Upper lobe of right lung (tissue), 1 donor: ENCODE measurements at regions of chr5 and their contacts with region 1.

Region 1: GRCh38 chr5:10627160-10627701 is 63.4 kb downstream of the ANKRD33B start:
- DNase-seq: peak; percentile 51
- ATAC-seq: no peak
- H3K4me3 ChIP-seq: peak overlapping the region; percentile 32
- H3K27ac ChIP-seq: peak overlapping the region; percentile 58
- H3K4me1 ChIP-seq: peaks cover 8% of the 10 kb centered on the region
- H3K27me3 ChIP-seq: no peaks in the 10 kb centered on the region
- CTCF ChIP-seq: no peak

Region 2: GRCh38 chr5:10366310-10367297 is 260.6 kb before region 1 on chr5:
- intact Hi-C with region 1: no loop called
- DNase-seq: no peak
- ATAC-seq: no peak
- H3K4me3 ChIP-seq: no peak overlapping the region
- H3K27ac ChIP-seq: peak overlapping the region; percentile 20
- H3K4me1 ChIP-seq: peaks cover 13% of the 10 kb centered on the region
- H3K27me3 ChIP-seq: no peaks in the 10 kb centered on the region
- CTCF ChIP-seq: no peak

Region 3: DNA sequence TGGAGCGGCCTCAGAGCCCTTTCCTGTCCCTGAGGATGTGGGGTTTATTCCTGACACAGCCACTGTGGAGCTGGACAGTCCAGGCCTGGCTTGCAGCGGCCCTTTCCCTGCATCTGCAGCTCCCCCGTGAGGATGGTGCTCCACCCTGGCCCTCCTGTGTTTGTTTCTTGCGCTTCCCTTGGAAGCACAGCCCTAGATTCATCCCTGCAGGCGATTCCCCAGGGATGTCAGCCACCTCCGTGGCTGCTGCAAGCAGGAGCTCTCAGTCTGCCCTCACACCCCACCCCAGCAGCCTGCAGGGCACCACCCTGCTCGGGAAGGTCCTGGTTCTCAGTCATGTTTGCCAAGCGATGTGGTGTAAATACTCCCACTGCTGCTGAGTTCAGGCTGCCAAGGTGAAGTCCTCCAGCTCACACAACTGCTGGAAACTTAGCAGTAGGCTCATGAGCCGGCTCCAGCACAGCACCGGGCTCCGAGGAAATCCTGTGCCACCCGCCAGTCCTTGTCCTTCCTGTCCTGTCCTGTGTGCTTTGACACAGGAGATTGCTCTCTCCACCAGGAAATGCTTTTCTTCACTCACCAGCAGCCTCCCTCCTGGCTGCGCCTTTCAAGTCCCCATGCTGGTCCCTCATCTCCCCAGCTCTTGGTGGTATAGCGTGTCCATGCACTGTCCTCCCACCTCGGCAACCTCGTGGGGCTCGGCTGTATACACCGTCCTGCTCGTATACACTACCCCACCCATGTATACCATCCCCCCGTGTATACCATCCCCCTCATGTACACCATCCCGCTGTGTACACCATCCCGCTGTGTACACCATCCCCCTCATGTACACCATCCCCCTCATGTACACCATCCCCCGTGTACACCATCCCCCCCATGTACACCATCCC is 169.3 kb before region 1 on chr5:
- intact Hi-C with region 1: loop called (anchors 5 kb)
- DNase-seq: no peak
- ATAC-seq: peak; percentile 62
- H3K4me3 ChIP-seq: no peak overlapping the region
- H3K27ac ChIP-seq: no peak overlapping the region
- H3K4me1 ChIP-seq: peaks cover 13% of the 10 kb centered on the region
- H3K27me3 ChIP-seq: no peaks in the 10 kb centered on the region
- CTCF ChIP-seq: peak; percentile 8

Region 4: GRCh38 chr5:10479226-10479721 is 148.0 kb before region 1 on chr5:
- intact Hi-C with region 1: no loop called
- DNase-seq: no peak
- ATAC-seq: peak; percentile 81
- H3K4me3 ChIP-seq: no peak overlapping the region
- H3K27ac ChIP-seq: no peak overlapping the region
- H3K4me1 ChIP-seq: no peaks in the 10 kb centered on the region
- H3K27me3 ChIP-seq: no peaks in the 10 kb centered on the region
- CTCF ChIP-seq: no peak

Region 5: GRCh38 chr5:10565785-10566542 is 61.3 kb before region 1 on chr5:
- intact Hi-C with region 1: no loop called
- DNase-seq: no peak
- ATAC-seq: no peak
- H3K4me3 ChIP-seq: peak overlapping the region; percentile 68
- H3K27ac ChIP-seq: no peak overlapping the region
- H3K4me1 ChIP-seq: peaks cover 25% of the 10 kb centered on the region
- H3K27me3 ChIP-seq: peaks cover 19% of the 10 kb centered on the region
- CTCF ChIP-seq: no peak

Region 6: DNA sequence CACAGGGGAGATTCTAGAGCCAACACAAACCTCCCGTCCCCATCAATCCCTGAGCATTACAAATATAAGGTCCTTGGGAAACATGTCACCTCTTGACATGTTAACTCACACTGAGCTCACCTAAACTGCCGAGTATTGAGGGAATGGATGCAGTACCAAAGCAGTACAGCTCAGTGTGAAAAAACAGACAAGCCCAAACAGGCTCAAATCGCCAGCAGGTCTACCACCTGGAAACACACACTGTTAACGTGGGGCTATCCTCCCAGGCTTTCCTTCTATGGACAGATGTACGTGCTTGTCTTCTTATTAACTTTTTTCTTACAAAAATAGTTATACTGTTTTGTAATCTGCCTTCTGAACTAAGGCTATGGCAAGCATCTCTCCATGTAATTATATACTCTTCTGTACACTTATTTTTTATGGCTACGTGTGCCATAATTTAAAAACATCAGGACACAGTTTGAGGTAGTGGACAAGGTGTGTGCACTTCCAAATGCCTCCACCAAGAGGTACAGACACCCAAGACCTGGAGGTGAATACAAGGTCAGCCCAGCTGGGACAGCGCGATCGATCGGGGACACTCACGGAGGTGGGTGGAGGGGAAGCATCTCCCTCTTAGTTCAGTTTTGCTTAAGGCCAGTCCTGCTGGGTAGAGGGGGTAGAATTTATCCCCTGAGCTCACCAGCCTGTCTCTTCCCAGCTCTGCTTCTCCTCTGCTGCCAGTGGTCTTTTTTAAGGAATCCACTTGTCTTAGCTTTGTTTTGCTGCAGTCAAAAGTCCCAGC is 57.3 kb after region 1 on chr5:
- intact Hi-C with region 1: no loop called
- DNase-seq: no peak
- ATAC-seq: no peak
- H3K4me3 ChIP-seq: no peak overlapping the region
- H3K27ac ChIP-seq: no peak overlapping the region
- H3K4me1 ChIP-seq: no peaks in the 10 kb centered on the region
- H3K27me3 ChIP-seq: no peaks in the 10 kb centered on the region
- CTCF ChIP-seq: no peak